PC-9 (cell line): ENCODE measurements at regions of chr1 and their contacts with region 1.

Region 1: DNA sequence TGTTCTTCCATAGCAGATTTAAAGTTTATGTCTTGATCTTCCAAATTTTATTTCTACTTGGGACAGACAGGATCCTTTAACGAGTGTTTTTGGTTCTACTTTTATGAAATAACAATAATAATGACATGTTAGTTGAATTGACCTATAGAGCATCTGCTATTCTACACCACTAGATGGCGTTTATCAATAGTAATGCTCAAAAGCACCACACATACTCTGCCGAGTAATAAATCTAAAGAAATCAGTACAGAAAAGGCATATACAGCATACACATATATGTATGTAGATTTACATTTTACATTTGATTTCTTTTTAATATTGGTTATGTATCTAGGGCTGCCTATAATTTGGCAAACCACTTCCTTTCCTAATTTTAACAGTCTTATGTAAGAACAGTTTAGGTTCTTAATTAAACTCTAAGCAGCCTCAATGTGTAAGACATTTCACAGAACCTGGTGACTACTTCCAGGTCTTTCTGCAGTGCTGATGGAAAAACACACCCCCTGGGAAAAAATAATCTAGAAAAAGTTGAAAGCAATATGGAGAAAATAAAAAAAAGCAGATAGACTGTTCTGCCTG is 5.9 kb upstream of the SIPA1L2 start:
- DNase-seq: peak in 1 of 2 experiments; percentile 38
- H3K4me3 ChIP-seq: no peak overlapping the region
- H3K27ac ChIP-seq: no peak overlapping the region
- H3K4me1 ChIP-seq: no peaks in the 10 kb centered on the region
- H3K27me3 ChIP-seq: no peaks in the 10 kb centered on the region
- CTCF ChIP-seq: peak; percentile 88

Region 2: DNA sequence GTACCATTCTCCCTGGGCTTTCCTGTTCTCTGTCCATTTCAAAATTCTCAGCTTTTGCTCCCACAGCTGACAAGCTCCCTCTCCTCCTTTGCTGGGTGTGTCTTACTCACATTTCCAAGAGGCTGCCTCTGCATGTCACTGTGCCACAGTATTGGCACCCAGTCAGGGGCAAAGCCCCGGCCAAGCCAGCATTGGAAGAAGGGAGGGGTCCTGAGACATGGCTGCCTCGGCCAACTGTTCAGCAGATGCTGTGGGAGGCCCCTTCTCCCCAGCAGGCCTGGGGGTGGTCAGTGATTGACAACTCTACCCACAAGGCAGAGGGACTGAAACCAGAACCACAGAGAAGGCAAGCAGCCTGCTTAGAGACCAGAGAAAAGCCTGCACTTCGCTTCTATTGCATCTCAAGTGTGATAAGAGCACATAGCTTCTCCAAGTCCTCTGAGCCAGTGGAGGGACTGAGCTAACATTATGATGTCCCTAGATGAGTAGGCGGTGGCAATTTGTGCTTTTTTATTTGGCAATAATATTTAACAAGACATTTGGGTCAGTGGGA is 300.1 kb before region 1 on chr1:
- CTCF ChIA-PET with region 1: no interaction called
- POLR2A ChIA-PET with region 1: no interaction called
- intact Hi-C with region 1: no loop called
- DNase-seq: no peak
- H3K4me3 ChIP-seq: no peak overlapping the region
- H3K27ac ChIP-seq: no peak overlapping the region
- H3K4me1 ChIP-seq: no peaks in the 10 kb centered on the region
- H3K27me3 ChIP-seq: peaks cover 60% of the 10 kb centered on the region
- CTCF ChIP-seq: no peak

Region 3: DNA sequence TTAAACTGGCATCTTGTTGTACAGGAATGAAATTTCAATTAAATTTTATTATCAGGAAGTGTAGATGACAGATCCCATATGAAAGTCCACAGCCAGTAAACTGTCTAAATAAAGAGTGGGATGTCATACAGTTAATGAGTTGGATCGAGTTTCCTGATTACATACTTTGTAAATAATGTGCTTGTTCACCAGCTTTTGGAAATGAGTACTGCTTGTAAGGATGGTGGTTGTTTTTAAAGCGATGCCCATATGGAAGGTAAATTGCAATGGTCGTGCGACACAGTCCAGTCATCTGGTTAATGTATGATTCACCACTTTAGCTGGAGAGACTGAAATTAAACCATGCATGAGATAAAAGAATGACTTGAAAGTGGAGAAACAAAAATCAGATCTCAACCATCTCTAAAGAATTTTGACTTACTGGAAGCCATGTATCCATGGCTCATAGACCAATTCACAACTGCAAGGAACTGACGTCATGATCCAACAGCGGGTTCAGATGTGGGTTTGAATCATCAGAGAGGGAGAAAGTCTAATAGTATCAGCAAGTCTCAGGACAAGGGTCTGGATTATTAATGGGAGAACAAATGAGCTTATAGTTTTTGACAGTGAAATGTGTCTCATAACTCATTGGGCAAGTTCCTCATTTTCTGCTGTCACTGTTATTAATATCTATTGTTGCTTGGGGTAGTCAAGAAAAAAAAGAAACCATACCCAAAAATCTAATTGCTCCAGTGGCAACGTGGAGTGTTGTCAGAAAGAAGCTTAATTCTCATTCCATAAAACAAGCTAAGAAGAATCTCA is 218.3 kb after region 1 on chr1:
- CTCF ChIA-PET with region 1: no interaction called
- POLR2A ChIA-PET with region 1: no interaction called
- intact Hi-C with region 1: no loop called
- DNase-seq: no peak
- H3K4me3 ChIP-seq: no peak overlapping the region
- H3K27ac ChIP-seq: no peak overlapping the region
- H3K4me1 ChIP-seq: no peaks in the 10 kb centered on the region
- H3K27me3 ChIP-seq: no peaks in the 10 kb centered on the region; the same call in 1 of the 2 replicates
- CTCF ChIP-seq: no peak

Region 4: DNA sequence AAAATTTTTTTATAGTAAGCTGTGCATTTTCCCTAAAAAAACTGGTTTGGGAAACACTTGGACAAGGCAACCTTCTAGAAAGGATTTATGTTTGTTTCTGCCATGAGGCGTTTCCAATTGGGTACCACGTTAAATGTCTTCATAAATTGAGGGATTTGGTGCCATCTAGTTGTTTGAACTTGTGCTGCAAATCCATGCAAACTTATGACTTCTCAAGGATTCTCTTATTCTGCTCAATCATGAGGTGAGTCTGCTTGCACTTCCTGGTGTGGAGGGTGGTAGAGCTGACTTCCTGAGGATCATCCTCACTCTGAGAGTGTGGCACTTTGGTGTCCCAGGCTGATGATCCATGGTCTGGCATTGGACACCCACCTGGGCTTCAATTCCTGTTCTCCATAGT is 536.4 kb after region 1 on chr1:
- CTCF ChIA-PET with region 1: no interaction called
- POLR2A ChIA-PET with region 1: no interaction called
- intact Hi-C with region 1: loop called (anchors 1 kb)
- DNase-seq: no peak
- H3K4me3 ChIP-seq: no peak overlapping the region
- H3K27ac ChIP-seq: no peak overlapping the region
- H3K4me1 ChIP-seq: no peaks in the 10 kb centered on the region
- H3K27me3 ChIP-seq: no peaks in the 10 kb centered on the region
- CTCF ChIP-seq: peak; percentile 48

Region 5: DNA sequence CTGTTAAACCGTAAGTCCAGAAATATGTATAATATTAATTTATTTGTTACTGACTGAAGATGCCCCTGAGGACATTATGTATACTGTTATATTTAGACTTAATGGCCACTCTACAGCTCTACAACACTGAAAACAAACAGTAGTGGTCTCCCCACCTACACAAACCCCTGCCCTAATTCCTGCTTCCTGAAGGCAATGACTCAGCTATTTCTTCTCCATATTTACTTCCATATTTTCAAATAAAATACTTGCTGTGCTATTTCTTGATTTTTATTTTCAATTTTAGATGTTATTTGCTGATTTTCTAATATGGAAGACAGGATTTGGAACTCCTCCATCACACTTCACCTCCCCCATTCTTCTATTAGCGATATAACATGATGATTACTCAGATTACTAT is 562.1 kb after region 1 on chr1:
- CTCF ChIA-PET with region 1: no interaction called
- POLR2A ChIA-PET with region 1: no interaction called
- intact Hi-C with region 1: no loop called
- DNase-seq: no peak
- H3K4me3 ChIP-seq: no peak overlapping the region
- H3K27ac ChIP-seq: peak overlapping the region; percentile 44; the same call in 1 of the 2 replicates
- H3K4me1 ChIP-seq: peaks cover 9% of the 10 kb centered on the region
- H3K27me3 ChIP-seq: no peaks in the 10 kb centered on the region
- CTCF ChIP-seq: no peak

Region 6: GRCh38 chr1:233240829-233241682 is 605.2 kb after region 1 on chr1:
- CTCF ChIA-PET with region 1: no interaction called
- POLR2A ChIA-PET with region 1: no interaction called
- intact Hi-C with region 1: loop called (anchors 1 kb)
- DNase-seq: peak in 1 of 2 experiments; percentile 31
- H3K4me3 ChIP-seq: no peak overlapping the region
- H3K27ac ChIP-seq: no peak overlapping the region
- H3K4me1 ChIP-seq: no peaks in the 10 kb centered on the region
- H3K27me3 ChIP-seq: no peaks in the 10 kb centered on the region
- CTCF ChIP-seq: peak; percentile 57